ENCODE measurements at regions of chr14 and their contacts with region 1.

Region 1: GRCh38 chr14:49620182-49621113 is at the starts of genes MGAT2 and RPL36AL:
- DNase-seq: peak; percentile 96 to 99 (median 99)

Region 2: DNA sequence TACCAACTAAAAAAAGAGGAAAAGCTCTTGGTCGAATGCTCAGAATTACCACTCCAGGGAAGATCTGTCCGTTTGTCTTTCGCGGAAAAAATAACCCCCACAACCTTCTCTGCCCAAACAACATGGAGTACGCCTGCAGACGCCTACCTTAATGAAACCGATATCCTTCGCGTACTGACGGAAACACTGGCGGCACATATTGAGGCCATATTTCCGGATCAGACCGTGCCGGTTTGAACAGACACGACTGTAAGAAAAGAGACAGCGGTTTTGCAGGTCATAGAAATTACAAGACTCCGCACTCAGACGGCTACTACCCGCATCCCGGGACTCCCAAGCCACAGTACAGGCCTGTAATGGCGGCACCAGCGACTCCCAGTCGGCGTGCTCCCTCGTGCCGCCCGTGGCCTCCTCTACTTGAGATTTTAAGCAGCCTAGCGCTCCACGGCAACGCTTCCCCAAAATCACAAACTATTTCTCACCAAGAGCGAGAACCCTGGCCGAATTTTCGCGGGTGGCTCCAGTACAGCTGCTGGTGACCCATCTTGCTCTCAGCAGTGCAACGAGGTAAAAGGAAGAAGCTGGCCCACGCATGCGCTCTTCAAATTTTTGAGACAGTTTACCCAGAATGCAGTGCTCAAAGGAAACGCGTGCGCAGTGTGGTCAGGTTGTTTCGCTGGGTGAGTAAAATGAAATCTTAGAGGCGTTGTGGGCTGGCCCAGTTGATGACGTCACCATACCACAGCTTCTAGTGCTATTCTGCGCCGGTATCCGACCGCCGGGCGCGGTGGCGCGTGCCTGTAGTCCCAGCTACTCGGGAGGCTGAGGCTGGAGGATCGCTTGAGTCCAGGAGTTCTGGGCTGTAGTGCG is 34.4 kb before region 1 on chr14 and contains the start of gene RPS29:
- intact Hi-C with region 1: loop called (anchors 1 kb)
- DNase-seq: peak; percentile 88 to 99 (median 95)